ENCODE measurements at regions of chr4 and their contacts with region 1.

Region 1: GRCh38 chr4:38967260-38968095 is 64.7 kb downstream of the TMEM156 start:
- DNase-seq: no peak

Region 2: GRCh38 chr4:38983787-38984598 is 16.5 kb after region 1 on chr4:
- intact Hi-C with region 1: no loop called
- DNase-seq: no peak

Region 3: GRCh38 chr4:40617872-40618271 is 1650.4 kb after region 1 on chr4:
- intact Hi-C with region 1: loop called in 1 of 2 experiments (anchors 5 kb)
- DNase-seq: no peak

Measured in posterior vena cava (tissue), 2 donors.